Psoas muscle (tissue), 8 donors: ENCODE measurements at regions of chr2 and their contacts with region 1.

Region 1: GRCh38 chr2:54967759-54968365 is 82.4 kb downstream of the RTN4 start:
- DNase-seq: no peak
- ATAC-seq: peak; percentile 0 to 43 (median 26)
- H3K4me3 ChIP-seq: peak overlapping the region; percentile 16
- H3K27ac ChIP-seq: peak overlapping the region; percentile 95
- H3K4me1 ChIP-seq: peaks cover 62% of the 10 kb centered on the region
- H3K27me3 ChIP-seq: no peaks in the 10 kb centered on the region
- CTCF ChIP-seq: no peak

Region 2: DNA sequence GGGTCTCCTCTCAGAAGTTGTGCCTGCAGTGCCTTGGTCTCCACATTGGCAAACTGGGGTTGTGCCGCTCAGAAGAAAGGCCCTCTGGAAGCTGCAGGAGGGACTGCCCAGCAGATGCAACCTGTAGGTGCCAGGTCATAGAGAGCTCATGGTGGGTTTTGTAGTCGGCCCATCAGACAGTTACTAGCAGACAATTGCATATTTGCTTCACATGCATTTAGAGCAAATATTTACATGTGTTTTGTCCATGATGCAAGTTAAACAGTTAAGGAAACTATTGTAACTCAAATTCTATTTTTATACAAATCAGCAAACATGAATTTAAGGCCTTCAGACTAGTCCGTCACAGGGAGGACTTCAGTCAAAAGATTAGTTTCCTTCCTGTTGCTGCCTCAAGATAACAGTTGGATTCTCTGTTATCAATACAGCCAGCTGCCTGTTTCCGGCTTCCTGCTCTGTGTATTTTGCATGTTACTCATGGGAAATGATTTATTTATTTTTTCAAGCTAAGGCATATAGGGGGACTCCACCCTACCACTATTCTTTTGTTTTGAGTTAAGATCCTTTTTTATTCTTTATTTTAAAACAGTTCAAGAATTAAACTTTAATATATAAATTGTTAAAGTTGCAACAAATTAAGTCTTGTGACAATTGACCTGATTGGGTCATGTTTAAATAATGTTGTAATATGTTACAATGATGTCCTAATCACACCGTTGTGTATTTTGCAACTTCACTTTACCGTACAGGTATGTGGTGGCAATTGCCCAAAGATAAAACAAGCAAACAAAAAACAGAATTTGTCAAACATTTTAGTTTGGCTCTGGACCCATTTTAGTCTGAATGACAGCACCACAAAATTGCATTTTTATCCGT is 378.3 kb before region 1 on chr2:
- intact Hi-C with region 1: no loop called
- DNase-seq: no peak
- ATAC-seq: peak in 1 of 4 donors; percentile 61
- H3K4me3 ChIP-seq: no peak overlapping the region
- H3K27ac ChIP-seq: peak overlapping the region; percentile 43
- H3K4me1 ChIP-seq: peaks cover 38% of the 10 kb centered on the region
- H3K27me3 ChIP-seq: no peaks in the 10 kb centered on the region
- CTCF ChIP-seq: no peak

Region 3: DNA sequence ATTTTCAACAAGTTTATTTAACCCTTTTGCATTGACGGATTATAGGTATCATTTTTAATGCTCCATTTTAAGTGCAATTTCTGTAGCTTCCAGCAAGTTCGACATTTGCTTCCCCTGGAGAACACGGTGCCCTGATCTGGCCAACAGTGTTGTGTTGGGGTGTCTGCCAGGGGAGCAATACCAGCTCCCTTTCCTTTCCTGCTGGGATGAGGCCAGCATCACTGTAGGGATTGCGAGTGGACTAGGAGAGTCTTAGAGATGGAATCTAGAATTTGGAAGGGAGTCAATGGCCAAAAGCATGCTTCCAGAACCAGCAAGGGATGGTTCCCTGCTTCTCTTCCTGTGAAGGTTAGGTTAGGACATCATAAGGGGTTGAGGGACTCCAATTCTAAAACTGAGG is 52.8 kb before region 1 on chr2:
- intact Hi-C with region 1: no loop called
- DNase-seq: no peak
- ATAC-seq: no peak
- H3K4me3 ChIP-seq: no peak overlapping the region
- H3K27ac ChIP-seq: no peak overlapping the region
- H3K4me1 ChIP-seq: no peaks in the 10 kb centered on the region
- H3K27me3 ChIP-seq: no peaks in the 10 kb centered on the region
- CTCF ChIP-seq: no peak

Region 4: DNA sequence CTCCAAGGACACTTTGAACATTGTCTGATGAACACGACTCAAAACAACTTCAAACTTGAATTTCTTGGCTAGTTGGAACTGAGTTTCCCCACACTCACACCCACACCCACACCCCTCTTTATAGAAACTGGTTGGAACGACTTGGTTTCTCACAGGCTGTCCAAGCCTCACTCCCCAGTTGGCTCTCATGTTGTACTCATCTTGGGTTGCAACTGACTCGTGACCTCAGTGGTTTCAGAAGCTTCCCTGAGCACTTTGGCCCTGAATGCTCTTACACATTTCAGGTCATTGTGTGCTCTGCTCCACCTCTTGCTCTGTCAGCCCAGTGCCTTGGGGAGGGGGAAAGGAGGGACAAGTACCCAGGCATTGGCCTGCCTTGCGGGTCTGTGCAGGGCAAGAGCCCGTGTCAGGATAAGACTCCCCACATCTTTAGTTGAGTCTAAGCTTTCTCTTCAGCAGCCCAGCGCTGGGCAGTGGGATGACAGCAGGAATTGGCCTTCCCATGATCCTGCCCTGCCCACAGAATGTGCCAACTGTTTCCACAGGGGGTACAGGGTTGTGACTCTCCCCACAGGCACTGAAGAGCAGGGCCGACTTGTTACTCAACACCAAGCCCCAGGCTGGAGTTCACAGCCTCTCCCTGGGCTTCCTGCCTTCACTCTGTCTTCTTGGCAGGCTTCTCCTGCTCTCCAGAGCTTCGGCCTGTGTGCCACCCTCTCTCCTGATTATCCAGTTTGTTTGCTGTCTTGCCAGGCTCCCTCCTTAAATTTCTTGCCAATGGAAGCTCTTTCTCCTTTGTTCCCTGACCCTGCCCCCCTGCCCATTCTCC is 22.3 kb before region 1 on chr2:
- intact Hi-C with region 1: loop called in 1 of 2 experiments (anchors 1 kb)
- DNase-seq: peak; percentile 80 to 92
- ATAC-seq: peak; percentile 92 to 97 (median 96)
- H3K4me3 ChIP-seq: peak overlapping the region; percentile 29
- H3K27ac ChIP-seq: peak overlapping the region; percentile 93
- H3K4me1 ChIP-seq: peaks cover 23% of the 10 kb centered on the region
- H3K27me3 ChIP-seq: no peaks in the 10 kb centered on the region
- CTCF ChIP-seq: no peak

Region 5: GRCh38 chr2:55010149-55010591 is 42.3 kb after region 1 on chr2:
- intact Hi-C with region 1: loop called in 1 of 2 experiments (anchors 5 kb)
- DNase-seq: peak; percentile 33 to 70
- ATAC-seq: peak; percentile 85 to 89 (median 88)
- H3K4me3 ChIP-seq: peak overlapping the region; percentile 72
- H3K27ac ChIP-seq: peak overlapping the region; percentile 95
- H3K4me1 ChIP-seq: peaks cover 49% of the 10 kb centered on the region
- H3K27me3 ChIP-seq: no peaks in the 10 kb centered on the region
- CTCF ChIP-seq: no peak

Region 6: GRCh38 chr2:55033066-55033742 is 65.3 kb after region 1 on chr2:
- intact Hi-C with region 1: no loop called
- DNase-seq: no peak
- ATAC-seq: no peak
- H3K4me3 ChIP-seq: no peak overlapping the region
- H3K27ac ChIP-seq: no peak overlapping the region
- H3K4me1 ChIP-seq: no peaks in the 10 kb centered on the region
- H3K27me3 ChIP-seq: no peaks in the 10 kb centered on the region
- CTCF ChIP-seq: no peak